ENCODE measurements at regions of chr16 and their contacts with region 1.

Region 1: DNA sequence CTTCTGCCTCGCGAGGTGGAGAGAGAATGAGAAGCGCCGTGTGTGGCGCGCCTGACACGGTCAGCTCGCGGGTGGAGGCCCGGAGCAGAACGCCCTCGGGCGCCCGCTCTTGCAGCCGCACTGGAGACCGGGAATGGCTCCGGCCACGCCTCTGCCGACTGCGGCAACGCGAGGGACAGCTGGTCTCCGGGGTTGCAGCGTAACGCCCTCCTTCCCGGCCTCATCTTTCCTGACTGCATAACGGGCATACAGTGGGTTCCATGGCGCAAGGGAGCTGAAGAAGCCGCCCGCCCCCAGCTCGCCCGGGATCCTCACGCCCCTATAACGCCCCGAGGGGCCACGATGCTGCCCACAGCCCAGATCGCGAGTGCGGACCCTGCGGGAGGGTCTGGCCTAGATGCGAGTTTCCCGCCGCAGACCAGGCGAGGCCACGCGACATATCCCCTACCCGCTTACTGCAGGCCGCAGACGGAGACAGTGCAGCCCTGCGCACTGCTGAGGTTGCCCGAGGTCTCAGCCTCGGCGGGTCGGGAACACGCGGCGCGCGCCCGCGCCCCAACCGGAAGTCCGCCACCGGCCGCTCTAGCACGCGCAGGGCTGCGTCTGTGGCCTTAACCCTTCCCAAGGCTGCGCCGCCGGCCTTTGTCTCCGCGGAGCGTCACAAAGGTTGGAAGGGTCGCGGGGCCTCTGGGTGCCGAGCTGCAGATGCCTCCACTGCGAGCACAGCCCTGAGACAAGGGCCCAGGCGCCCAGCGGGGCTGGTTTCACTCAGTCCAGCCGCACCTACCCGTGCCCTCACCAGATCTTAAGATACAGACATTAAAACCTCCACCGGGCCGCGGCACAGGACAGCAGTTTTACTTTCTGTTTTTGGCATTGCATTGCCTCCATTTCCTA is 18.8 kb downstream of the BCL7C start:
- DNase-seq: peak; percentile 83
- H3K4me3 Mint-ChIP-seq: peak overlapping the region; percentile 96
- H3K27ac Mint-ChIP-seq: peak overlapping the region; percentile 86
- H3K4me1 Mint-ChIP-seq: peaks cover 24% of the 10 kb centered on the region
- H3K27me3 Mint-ChIP-seq: no peaks in the 10 kb centered on the region

Region 2: DNA sequence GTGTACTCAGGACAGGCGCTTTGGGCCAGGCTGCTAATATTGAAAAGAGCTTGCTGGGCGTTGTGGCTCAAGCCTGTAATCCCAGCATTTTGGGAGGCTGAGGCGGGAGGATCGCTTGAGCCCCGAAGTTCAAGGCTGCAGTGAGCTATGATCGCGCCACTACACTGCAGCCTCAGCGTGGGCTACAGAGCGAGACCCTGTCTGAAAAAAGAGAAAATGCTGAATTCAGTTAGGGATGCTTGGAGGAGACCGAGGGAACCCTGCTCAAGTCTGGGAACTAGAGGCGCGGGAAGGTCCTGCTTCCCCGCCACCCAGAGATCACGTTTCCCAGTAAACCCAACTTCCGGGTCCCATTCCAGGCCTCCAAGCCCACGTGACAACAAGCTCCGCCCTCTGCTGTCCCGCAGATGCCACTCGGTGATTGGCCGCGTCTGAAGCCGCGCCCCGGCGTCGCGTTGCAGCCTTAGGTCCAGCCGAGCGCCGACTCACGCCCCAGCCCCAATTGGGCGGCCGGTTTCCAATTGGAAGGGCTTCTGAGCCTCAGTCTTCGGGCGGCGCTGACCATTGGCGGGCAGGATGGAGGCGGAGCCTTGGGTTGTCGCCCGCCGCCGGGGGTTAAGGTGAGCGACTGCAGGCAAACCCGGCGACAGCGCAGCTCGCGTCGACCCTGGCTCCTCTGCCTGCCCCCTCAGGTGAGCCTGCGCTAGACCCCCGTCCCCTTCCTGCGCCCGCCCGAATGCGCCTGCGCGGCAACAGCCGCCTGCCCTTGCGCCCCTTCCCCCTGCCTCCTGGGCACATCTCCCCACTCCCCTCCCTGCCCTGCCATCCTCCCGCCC is 127.1 kb before region 1 on chr16 and contains the start of gene PHKG2:
- intact Hi-C with region 1: loop called (anchors 1 kb)
- DNase-seq: peak; percentile 98
- H3K4me3 Mint-ChIP-seq: peak within 1 kb of the TSS; percentile 94
- H3K27ac Mint-ChIP-seq: peak within 1 kb of the TSS; percentile 78
- H3K4me1 Mint-ChIP-seq: peaks cover 18% of the 10 kb centered on the region
- H3K27me3 Mint-ChIP-seq: no peaks in the 10 kb centered on the region
- total RNA-seq, gene PHKG2: 38.1 and 41.6 TPM in 2 replicates

Region 3: DNA sequence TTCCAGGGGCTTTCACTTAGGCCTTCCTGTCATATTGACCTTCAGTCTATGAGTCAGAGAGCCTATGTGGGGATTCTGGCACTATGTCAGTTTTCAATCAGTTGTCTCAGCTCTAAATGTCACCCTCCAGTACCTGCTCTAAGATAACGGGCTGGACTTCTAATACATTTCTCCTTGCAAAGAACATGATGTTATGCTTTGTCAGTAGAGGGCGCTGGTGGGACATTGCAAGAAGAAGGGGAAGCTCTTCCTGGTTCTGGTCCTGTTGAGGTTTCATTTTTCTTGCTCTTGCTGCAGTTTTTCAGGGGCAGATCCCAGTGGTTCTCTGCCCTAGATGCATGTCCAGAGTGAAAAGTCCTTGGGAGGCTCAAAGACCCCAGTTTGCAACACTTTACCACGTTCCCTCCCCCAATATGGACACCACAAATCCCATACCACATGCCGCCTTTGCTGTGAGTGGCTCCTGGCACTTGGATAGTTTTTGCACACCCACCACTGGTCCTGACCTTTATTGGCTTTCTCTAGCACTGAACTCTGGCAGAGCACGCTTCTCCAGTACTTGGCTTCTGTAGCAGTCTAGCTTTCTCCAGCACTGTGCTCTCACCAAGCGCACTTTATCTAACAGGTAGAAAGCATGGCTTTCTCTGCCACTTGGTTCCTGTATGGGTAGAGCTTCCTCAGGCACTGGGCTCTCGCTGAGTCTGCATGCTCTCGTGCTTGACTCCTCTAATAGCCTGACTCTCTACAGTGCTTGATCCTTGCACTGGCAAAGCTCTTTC is 30.2 kb before region 1 on chr16:
- intact Hi-C with region 1: loop called (anchors 2 kb)
- DNase-seq: peak; percentile 74
- H3K4me3 Mint-ChIP-seq: no peak overlapping the region
- H3K27ac Mint-ChIP-seq: peak overlapping the region; percentile 40
- H3K4me1 Mint-ChIP-seq: peaks cover 10% of the 10 kb centered on the region
- H3K27me3 Mint-ChIP-seq: no peaks in the 10 kb centered on the region

Region 4: DNA sequence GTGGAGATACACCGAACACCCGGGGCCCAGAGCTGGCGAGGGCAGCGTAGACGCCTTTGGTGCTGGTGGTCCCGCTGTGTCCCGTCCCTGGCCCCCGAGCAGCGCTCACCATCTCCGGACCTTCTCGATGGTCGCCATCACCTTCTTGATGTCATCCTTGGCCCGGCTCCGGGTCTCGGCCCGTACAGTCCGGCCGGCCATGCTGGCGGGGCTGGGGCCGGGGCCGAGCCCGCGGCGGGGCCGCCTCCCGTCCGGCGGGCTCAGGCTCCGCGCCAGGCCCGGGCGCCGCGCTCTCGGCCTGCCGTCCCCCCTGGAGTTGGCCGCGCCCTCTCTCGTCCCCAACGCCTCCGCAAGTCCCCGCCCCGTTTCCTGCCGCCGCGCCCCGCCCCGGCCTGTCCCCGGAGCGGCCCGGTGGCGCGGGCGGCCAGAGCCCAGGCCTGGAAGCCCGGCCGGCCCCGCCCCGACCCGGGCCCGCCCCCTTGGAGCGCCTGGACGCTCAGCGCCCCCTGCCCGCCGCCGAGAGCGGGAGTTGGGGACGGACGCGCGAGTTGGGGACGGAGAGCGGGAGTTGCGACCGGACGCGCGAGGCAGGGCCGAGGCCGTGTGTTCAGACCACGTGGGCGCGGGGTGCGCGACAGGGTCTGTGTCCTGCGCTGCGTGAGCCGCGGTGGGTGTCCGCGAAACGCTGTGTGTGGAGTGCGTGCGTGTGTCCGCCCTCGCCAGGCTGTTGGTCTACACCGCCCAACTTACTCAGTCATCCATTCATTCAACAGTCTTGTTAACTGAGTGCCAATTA is 18.9 kb after region 1 on chr16 and contains the start of gene BCL7C:
- intact Hi-C with region 1: loop called (anchors 1 kb)
- DNase-seq: peak; percentile 82
- H3K4me3 Mint-ChIP-seq: peak within 1 kb of the TSS; percentile 91
- H3K27ac Mint-ChIP-seq: peak within 1 kb of the TSS; percentile 83
- H3K4me1 Mint-ChIP-seq: peaks cover 26% of the 10 kb centered on the region
- H3K27me3 Mint-ChIP-seq: no peaks in the 10 kb centered on the region
- total RNA-seq, gene BCL7C: 26.8 and 27.1 TPM in 2 replicates

Region 5: GRCh38 chr16:30902029-30902972 is 27.2 kb after region 1 on chr16:
- intact Hi-C with region 1: loop called (anchors 2 kb)
- DNase-seq: peak; percentile 60
- H3K4me3 Mint-ChIP-seq: peak overlapping the region; percentile 96
- H3K27ac Mint-ChIP-seq: peak overlapping the region; percentile 100
- H3K4me1 Mint-ChIP-seq: peaks cover 28% of the 10 kb centered on the region
- H3K27me3 Mint-ChIP-seq: no peaks in the 10 kb centered on the region

Measured in activated T-helper 2 cell treated with anti-CD3 and anti-CD28 coated beads, Interferon-gamma antibody, Interleukin-2, Interleukin-4, amounts not matched to agents 10 μg/mL and 5 μg/mL and 100 μg/mL, durations not matched to agents 14 hours and 24 hours and 36 hours (primary cell).